ENCODE measurements at regions of chr5 and their contacts with region 1.

Region 1: DNA sequence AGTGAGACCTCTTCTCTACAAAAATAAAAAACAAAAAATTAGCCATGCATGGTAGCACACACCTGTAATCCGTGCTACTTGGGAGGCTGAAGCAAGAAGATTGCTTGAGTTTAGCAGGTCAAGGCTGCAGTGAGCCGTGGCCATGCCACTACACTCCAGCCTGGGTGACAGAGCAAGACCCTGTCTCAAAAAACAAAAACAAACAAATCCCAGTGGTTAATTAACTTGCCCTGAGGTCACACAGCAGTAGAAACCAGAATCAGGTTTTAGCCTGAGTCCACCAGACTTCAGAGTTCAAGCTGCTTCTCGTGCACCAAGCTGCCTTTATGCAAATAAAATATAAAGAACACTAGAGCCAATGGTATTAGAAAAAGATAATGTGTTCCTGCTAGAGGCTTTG is 169.7 kb downstream of the GOLPH3 start:
- DNase-seq: no peak
- H3K4me3 ChIP-seq: no peak overlapping the region
- H3K27ac ChIP-seq: no peak overlapping the region
- H3K27me3 ChIP-seq: no peaks in the 10 kb centered on the region
- CTCF ChIP-seq: no peak

Region 2: DNA sequence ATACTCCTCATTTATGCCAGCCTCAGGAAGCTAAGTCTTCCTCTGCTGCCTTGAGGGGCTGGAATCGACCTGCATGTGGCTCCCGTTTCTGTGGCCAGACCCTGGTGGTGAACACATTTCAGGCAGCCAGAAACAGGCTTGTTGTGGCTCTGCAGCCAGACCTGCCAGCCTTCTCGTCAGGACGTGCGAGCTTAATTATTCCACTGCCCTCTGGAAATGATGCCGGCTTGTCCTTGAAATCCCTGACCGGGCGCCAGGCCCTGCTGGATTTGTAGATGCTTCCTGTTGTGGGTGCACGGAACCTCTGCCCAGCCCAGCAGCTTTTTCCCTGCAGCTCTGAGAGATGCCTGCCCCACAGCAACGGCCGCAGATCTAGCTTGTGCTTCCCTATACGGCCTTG is 323.9 kb before region 1 on chr5:
- intact Hi-C with region 1: no loop called
- DNase-seq: peak in 5 of 10 donors; percentile 8 to 54 (median 43)
- H3K4me3 ChIP-seq: no peak overlapping the region
- H3K27ac ChIP-seq: no peak overlapping the region
- H3K27me3 ChIP-seq: no peaks in the 10 kb centered on the region
- CTCF ChIP-seq: no peak

Region 3: DNA sequence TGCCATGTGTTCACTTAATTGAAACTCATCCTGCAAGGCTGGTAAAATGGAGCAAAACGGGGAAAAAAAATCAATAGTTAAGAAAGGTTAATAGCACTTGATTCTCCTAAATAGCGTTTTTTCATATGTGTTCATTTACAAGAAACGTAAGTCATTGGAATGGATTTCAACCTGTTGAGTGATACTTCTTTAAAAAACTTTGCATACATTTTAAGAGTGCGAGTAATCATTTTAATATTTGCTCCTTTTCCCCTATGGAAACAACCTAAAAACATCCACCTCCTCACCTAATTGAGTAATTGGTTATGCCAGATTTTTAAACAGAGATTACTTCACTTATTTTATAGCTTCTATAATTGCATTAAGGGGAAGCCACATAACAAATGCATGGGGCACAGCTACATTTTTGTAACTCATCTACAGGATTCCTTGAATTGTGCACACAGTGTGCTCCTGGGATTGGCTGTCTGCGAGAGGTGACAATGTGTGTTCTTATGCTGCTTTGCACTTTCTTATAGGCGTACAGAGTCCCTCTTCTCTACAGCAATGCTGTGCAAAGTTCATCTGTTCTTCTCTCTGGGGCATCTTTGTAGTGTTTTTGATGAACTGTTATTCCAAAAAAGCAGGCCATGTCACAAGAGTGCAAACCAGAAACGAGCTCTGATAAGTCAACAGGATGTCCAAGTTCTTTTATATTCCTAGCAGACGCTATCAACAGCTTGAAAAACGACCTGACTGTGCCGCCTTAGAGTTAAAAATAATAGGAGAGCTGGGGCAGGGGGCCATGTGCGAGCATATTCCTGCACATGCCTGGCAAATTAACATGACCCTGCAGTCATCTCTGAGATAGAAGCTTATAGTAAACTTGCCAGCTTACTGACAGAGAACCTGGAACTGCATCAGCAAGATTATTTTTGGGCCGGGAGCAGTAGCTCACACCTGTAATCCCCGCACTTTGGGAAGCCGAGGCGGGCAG is 51.8 kb after region 1 on chr5:
- intact Hi-C with region 1: loop called in 1 of 2 experiments (anchors 2 kb)
- DNase-seq: no peak
- H3K4me3 ChIP-seq: no peak overlapping the region
- H3K27ac ChIP-seq: peak overlapping the region in 2 of 59 donors; percentile 18 to 37
- H3K27me3 ChIP-seq: no peaks in the 10 kb centered on the region
- CTCF ChIP-seq: no peak

Region 4: GRCh38 chr5:32325062-32325461 is 320.7 kb after region 1 on chr5:
- intact Hi-C with region 1: no loop called
- DNase-seq: peak in 2 of 10 donors; percentile 49 to 54
- H3K4me3 ChIP-seq: peak overlapping the region in 1 of 59 donors; percentile 12
- H3K27ac ChIP-seq: peak overlapping the region in 9 of 59 donors; percentile 12 to 62 (median 38)
- H3K27me3 ChIP-seq: no peaks in the 10 kb centered on the region
- CTCF ChIP-seq: no peak